Gastrocnemius medialis (tissue), 4 donors: ENCODE measurements at regions of chrX and their contacts with region 1.

Region 1: DNA sequence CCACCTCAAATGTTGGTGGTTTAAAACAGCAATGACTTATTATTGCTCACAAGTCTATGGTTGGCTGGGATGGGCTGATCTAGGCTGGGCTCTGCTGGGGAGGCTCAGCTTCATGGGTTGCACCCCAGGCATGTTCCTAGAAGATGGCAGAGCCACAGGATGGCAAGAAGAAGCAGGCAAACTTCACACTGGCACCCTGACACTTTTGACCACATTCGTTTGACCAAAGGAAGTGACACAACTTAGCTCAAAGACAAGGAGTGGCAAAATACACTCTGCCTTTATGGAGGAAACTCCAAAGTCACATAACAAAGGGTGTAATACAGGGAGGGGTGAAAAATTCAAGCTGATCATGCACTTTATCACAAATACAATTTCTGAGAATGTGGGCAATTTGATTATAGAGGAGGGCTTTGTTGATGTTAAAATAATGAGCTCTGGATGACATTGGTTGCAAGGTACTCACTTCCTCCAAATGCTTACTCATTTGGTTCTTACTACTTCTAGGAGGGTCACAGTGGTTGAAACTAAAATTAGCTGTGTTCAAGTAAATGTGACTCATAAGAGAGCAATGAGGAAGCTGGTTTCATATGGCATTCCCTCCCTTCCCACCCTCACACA is 249.2 kb upstream of the RPS6KA3 start:
- DNase-seq: no peak
- ATAC-seq: peak; percentile 94 to 99
- H3K4me3 ChIP-seq: no peak overlapping the region
- H3K27ac ChIP-seq: peak overlapping the region in 3 of 4 donors; percentile 44 to 54 (median 50)
- H3K4me1 ChIP-seq: peaks cover 5 to 9% of the 10 kb centered on the region in 2 donors
- H3K27me3 ChIP-seq: no peaks in the 10 kb centered on the region
- CTCF ChIP-seq: no peak
- POLR2A ChIP-seq: no peak

Region 2: DNA sequence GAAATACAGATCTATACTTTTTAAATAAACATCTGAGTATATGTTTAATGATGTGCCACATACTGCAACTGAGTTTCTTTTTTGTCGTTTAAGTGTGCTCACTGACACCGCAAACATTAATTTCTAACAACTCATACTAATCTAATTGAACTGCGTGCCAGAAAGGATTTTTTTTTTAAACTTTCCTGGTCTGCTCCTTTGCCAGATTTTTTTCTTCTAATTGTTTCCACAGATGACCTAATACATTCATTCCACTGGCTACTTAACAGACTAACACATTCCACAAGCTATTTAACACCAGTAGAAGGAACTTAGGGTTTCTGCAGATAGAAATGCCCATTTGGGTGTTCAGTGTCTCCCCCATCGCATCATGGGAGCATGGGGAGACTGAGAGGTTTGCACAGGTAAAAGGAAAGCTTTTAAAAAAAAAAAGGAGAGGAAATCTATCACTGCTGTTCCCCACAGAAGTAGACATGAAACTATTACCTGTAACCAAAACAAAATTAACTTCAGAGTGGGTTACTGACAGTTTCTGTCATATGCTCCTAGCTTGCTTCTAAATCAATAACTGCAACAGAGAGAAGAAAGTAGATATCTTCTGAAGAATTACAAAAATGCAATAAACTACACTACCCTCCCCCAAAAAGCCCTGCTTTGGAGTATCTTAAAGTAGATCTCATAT is 660.1 kb before region 1 on chrX:
- in situ Hi-C with region 1: no loop called
- intact Hi-C with region 1: no loop called
- DNase-seq: no peak
- ATAC-seq: no peak
- H3K4me3 ChIP-seq: no peak overlapping the region
- H3K27ac ChIP-seq: no peak overlapping the region
- H3K4me1 ChIP-seq: no peaks in the 10 kb centered on the region
- H3K27me3 ChIP-seq: no peaks in the 10 kb centered on the region
- CTCF ChIP-seq: no peak
- POLR2A ChIP-seq: no peak

Region 3: GRCh38 chrX:20412871-20413486 is 103.0 kb before region 1 on chrX:
- in situ Hi-C with region 1: loop called in 1 of 4 experiments (anchors 25 kb)
- intact Hi-C with region 1: no loop called
- DNase-seq: peak in 1 of 2 donors; percentile 11
- ATAC-seq: no peak
- H3K4me3 ChIP-seq: no peak overlapping the region
- H3K27ac ChIP-seq: no peak overlapping the region
- H3K4me1 ChIP-seq: no peaks in the 10 kb centered on the region
- H3K27me3 ChIP-seq: no peaks in the 10 kb centered on the region
- CTCF ChIP-seq: no peak
- POLR2A ChIP-seq: no peak

Region 4: DNA sequence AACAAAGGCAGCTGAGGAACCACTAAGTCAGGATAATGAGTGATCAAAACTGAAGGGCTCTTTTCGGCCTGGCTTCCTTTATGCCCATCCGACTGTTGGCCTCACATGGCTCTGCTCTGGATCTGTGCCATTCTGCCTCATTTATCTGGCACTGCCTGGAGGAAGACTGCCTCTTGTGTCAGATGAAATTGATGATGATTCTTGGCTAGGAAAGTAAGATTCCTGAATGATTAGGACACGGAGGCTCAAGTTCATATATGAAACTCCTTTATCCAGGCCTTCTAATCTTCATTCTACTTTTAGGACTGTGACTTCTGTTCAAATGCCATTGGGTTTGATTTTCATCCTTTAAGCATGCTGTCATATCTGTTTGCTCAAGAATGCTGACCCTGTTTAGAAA is 226.2 kb after region 1 on chrX:
- in situ Hi-C with region 1: no loop called
- intact Hi-C with region 1: no loop called
- DNase-seq: no peak
- ATAC-seq: no peak
- H3K4me3 ChIP-seq: no peak overlapping the region
- H3K27ac ChIP-seq: no peak overlapping the region
- H3K4me1 ChIP-seq: no peaks in the 10 kb centered on the region
- H3K27me3 ChIP-seq: no peaks in the 10 kb centered on the region
- CTCF ChIP-seq: no peak
- POLR2A ChIP-seq: no peak

Region 5: GRCh38 chrX:21745756-21746155 is 1229.8 kb after region 1 on chrX:
- in situ Hi-C with region 1: loop called in 1 of 4 experiments (anchors 25 kb)
- intact Hi-C with region 1: no loop called
- DNase-seq: peak in 1 of 2 donors; percentile 42
- ATAC-seq: no peak
- H3K4me3 ChIP-seq: no peak overlapping the region
- H3K27ac ChIP-seq: peak overlapping the region; percentile 73 to 92 (median 84)
- H3K4me1 ChIP-seq: peaks cover 48 to 60% of the 10 kb centered on the region in 2 donors
- H3K27me3 ChIP-seq: no peaks in the 10 kb centered on the region
- CTCF ChIP-seq: peak; percentile 29 to 57 (median 39)
- POLR2A ChIP-seq: no peak